A673 (cell line): ENCODE measurements at regions of chr5 and their contacts with region 1.

Region 1: GRCh38 chr5:147935032-147935431 is 28.7 kb upstream of the C5orf46 start:
- DNase-seq: peak; percentile 82
- H3K4me3 ChIP-seq: no peak overlapping the region
- H3K27ac ChIP-seq: no peak overlapping the region
- H3K4me1 ChIP-seq: no peaks in the 10 kb centered on the region
- H3K27me3 ChIP-seq: no peaks in the 10 kb centered on the region
- CTCF ChIP-seq: peak; percentile 71

Region 2: GRCh38 chr5:147743678-147744374 is 191.2 kb before region 1 on chr5:
- CTCF ChIA-PET with region 1: no interaction called
- POLR2A ChIA-PET with region 1: no interaction called
- intact Hi-C with region 1: loop called (anchors 10 kb)
- DNase-seq: peak; percentile 99
- H3K4me3 ChIP-seq: no peak overlapping the region
- H3K27ac ChIP-seq: peak overlapping the region; percentile 97
- H3K4me1 ChIP-seq: peaks cover 91% of the 10 kb centered on the region
- H3K27me3 ChIP-seq: no peaks in the 10 kb centered on the region
- CTCF ChIP-seq: peak; percentile 21; the same call in 1 of the 2 replicates

Region 3: DNA sequence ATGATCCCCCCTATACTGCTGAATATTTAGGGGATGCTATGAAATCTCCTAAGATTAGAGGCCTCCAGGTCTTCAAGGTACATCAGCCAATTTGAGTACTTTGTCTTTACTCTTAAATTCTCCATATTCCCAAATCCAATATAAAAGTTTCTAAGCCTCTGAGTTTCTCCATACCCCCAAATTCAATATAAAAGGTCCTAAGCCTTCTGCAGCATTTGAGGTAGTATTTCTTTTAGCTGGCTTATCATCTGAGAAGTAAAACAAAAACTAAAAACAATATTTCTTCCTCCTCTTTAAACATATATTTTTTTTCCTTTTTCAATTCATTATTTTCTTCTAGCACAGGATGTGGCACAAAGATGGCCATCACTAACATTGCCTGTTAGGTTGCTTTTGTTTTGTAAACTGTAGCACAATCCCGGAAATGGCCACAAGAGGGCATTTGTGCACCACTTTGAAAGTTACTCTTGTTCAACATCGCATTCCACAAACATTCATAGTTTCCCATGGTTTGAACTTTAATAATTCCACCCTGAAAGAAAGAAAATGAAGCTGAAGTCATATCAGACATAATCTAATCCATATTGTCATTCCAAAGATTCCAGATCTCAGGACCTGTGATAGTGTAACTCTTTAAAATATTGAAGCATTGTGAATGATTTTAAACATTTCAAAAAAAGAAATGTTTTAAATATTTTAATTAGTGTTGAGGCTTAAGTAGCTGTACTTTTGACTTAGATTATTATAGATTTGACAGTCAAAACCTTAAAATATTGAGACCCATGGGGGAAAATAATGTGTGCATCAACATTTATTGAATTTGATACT is 77.5 kb before region 1 on chr5:
- CTCF ChIA-PET with region 1: no interaction called
- POLR2A ChIA-PET with region 1: no interaction called
- intact Hi-C with region 1: loop called (anchors 1 kb)
- DNase-seq: peak; percentile 81
- H3K4me3 ChIP-seq: no peak overlapping the region
- H3K27ac ChIP-seq: no peak overlapping the region
- H3K4me1 ChIP-seq: peaks cover 9% of the 10 kb centered on the region
- H3K27me3 ChIP-seq: no peaks in the 10 kb centered on the region
- CTCF ChIP-seq: peak; percentile 91

Region 4: DNA sequence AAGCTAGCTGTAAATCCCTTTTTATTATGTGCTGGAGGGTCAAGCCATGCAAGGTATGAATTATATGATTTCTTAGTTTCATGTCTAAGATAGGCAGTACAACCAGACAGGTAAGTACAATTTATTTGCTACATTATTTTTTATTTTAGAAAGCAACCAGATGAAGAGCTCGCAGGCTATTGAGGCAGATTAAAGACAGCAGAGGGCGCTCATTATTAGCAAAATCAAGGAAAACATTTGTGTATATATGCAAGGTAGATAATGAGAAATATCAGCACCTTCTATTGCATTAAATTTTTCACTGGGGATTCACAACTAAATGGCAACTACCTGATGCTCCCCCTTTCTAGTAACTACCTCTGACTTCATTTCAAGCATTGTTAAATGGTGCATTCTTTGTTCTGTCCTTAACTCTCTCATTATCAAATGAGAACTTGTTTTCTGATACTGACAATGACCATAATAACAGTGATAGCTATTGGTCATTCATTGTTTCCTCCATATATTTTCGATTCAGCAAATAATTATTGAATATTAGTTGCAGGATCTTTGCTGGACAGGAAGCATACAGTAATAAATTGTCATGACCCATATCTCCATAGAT is 47.9 kb before region 1 on chr5:
- CTCF ChIA-PET with region 1: interaction called, 8 read pairs
- POLR2A ChIA-PET with region 1: no interaction called
- intact Hi-C with region 1: loop called (anchors 1 kb)
- DNase-seq: peak; percentile 47
- H3K4me3 ChIP-seq: no peak overlapping the region
- H3K27ac ChIP-seq: no peak overlapping the region
- H3K4me1 ChIP-seq: no peaks in the 10 kb centered on the region
- H3K27me3 ChIP-seq: peaks cover 7% of the 10 kb centered on the region
- CTCF ChIP-seq: peak; percentile 79

Region 5: GRCh38 chr5:147906332-147907095 is 28.5 kb before region 1 on chr5 and contains the start of gene C5orf46:
- CTCF ChIA-PET with region 1: no interaction called
- POLR2A ChIA-PET with region 1: no interaction called
- intact Hi-C with region 1: no loop called
- DNase-seq: peak; percentile 26
- H3K4me3 ChIP-seq: no peak within 1 kb of the TSS
- H3K27ac ChIP-seq: no peak within 1 kb of the TSS
- H3K4me1 ChIP-seq: no peaks in the 10 kb centered on the region
- H3K27me3 ChIP-seq: no peaks in the 10 kb centered on the region
- CTCF ChIP-seq: no peak
- total RNA-seq, gene C5orf46: not detected in 2 replicates

Region 6: DNA sequence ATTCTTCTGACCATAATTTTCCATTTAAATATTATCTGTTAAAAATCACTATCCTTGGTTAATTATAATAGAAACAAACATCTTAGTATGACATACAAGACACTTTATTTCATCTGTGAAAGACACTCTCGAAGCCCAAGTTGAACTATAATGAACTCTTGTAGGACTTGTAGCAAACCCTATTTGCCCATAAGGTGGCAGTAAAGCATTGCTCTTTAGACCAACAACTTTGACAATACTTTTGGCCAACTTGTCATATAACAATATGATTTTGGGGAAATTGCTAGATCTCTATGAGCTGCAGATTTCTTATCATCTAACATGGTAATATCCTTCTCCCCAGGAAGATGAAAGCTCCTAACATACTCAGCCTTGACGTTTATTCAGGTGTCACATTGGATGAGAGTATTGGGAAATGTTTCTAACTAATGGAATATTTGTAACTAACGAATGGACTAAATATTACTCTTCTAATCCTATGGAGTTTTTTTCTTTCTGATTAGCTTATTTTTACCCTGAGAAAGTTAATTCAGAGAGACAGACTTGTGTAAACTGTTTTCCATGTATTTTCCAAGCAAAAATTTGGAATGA is 244.3 kb after region 1 on chr5:
- CTCF ChIA-PET with region 1: no interaction called
- POLR2A ChIA-PET with region 1: no interaction called
- intact Hi-C with region 1: no loop called
- DNase-seq: peak; percentile 58
- H3K4me3 ChIP-seq: no peak overlapping the region
- H3K27ac ChIP-seq: no peak overlapping the region
- H3K4me1 ChIP-seq: no peaks in the 10 kb centered on the region
- H3K27me3 ChIP-seq: peaks cover 32% of the 10 kb centered on the region
- CTCF ChIP-seq: peak; percentile 69